Left lung (tissue), 14 donors: ENCODE measurements at regions of chr12 and their contacts with region 1.

Region 1: DNA sequence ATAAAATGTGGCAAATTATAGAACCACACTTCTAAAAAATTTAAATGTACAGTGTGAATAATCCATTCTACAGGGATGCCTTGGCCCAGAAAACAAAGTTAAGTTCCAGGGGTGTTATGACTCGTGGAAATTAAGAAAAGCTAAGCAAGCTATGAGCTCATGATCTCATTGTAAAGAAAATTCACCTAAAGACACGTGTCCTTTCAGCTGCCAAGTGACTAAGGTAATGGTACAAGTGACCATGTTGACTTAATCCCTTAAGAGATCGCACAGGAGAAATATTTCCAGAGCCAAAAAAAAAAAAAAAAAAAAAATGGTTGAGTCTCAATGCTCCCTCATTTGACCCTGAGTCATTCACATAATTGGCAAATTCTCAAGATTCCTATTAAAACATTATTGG is 51.4 kb upstream of the ANO2 start:
- DNase-seq: no peak
- ATAC-seq: no peak
- H3K4me3 ChIP-seq: no peak overlapping the region
- H3K27ac ChIP-seq: no peak overlapping the region
- H3K4me1 ChIP-seq: no peaks in the 10 kb centered on the region
- H3K27me3 ChIP-seq: peaks cover 5 to 6% of the 10 kb centered on the region in 2 donors
- CTCF ChIP-seq: no peak

Region 2: DNA sequence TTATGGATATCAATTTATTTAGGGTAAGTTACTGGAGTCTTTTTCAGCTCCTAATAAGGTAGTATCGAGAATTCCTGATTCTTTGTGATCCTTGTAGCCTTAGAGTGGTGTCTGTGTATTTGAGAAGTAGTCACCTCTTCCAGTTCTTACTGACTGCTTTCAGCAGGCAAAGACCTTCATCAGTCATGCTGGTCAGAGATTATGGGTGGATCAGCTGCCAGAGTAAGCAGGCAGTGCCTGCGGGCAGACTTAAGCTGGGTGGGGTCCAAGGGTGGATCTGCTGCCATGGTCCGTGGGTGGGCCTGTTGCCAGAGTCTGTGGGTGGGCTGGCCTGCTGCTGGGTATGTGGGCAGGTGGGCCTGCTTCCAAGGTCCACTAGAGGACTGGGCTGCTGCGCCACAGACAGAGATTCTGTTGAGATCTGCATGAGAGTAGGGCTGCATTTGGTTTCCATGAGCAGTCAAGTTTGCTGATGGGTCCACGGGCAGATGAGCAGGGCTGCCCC is 240.1 kb before region 1 on chr12:
- intact Hi-C with region 1: no loop called
- DNase-seq: no peak
- ATAC-seq: no peak
- H3K4me3 ChIP-seq: no peak overlapping the region
- H3K27ac ChIP-seq: no peak overlapping the region
- H3K4me1 ChIP-seq: no peaks in the 10 kb centered on the region
- H3K27me3 ChIP-seq: peaks cover 5 to 14% of the 10 kb centered on the region in 2 donors
- CTCF ChIP-seq: no peak

Region 3: GRCh38 chr12:5808981-5809380 is 187.5 kb before region 1 on chr12:
- intact Hi-C with region 1: no loop called
- DNase-seq: no peak
- ATAC-seq: peak; percentile 42
- H3K4me3 ChIP-seq: no peak overlapping the region
- H3K27ac ChIP-seq: no peak overlapping the region
- H3K4me1 ChIP-seq: no peaks in the 10 kb centered on the region
- H3K27me3 ChIP-seq: peaks cover 0 to 11% of the 10 kb centered on the region in 2 donors
- CTCF ChIP-seq: no peak

Region 4: GRCh38 chr12:5830111-5830510 is 166.3 kb before region 1 on chr12:
- intact Hi-C with region 1: no loop called
- DNase-seq: no peak
- ATAC-seq: no peak
- H3K4me3 ChIP-seq: no peak overlapping the region
- H3K27ac ChIP-seq: no peak overlapping the region
- H3K4me1 ChIP-seq: no peaks in the 10 kb centered on the region
- H3K27me3 ChIP-seq: peaks cover 0 to 6% of the 10 kb centered on the region in 2 donors
- CTCF ChIP-seq: no peak

Region 5: GRCh38 chr12:5912437-5913334 is 83.8 kb before region 1 on chr12:
- intact Hi-C with region 1: no loop called
- DNase-seq: no peak
- ATAC-seq: no peak
- H3K4me3 ChIP-seq: no peak overlapping the region
- H3K27ac ChIP-seq: no peak overlapping the region
- H3K4me1 ChIP-seq: no peaks in the 10 kb centered on the region
- H3K27me3 ChIP-seq: peaks cover 0 to 15% of the 10 kb centered on the region in 2 donors
- CTCF ChIP-seq: no peak

Region 6: GRCh38 chr12:6033546-6033945 is 37.1 kb after region 1 on chr12:
- intact Hi-C with region 1: loop called in 1 of 2 experiments (anchors 5 kb)
- DNase-seq: no peak
- ATAC-seq: no peak
- H3K4me3 ChIP-seq: no peak overlapping the region
- H3K27ac ChIP-seq: no peak overlapping the region
- H3K4me1 ChIP-seq: no peaks in the 10 kb centered on the region
- H3K27me3 ChIP-seq: no peaks in the 10 kb centered on the region
- CTCF ChIP-seq: no peak